Right ventricle myocardium inferior (tissue), 1 donor: ENCODE measurements at regions of chr17 and their contacts with region 1.

Region 1: GRCh38 chr17:80263253-80264204 is 2.9 kb downstream of the RNF213 start:
- DNase-seq: peak; percentile 92
- ATAC-seq: peak; percentile 47

Region 2: DNA sequence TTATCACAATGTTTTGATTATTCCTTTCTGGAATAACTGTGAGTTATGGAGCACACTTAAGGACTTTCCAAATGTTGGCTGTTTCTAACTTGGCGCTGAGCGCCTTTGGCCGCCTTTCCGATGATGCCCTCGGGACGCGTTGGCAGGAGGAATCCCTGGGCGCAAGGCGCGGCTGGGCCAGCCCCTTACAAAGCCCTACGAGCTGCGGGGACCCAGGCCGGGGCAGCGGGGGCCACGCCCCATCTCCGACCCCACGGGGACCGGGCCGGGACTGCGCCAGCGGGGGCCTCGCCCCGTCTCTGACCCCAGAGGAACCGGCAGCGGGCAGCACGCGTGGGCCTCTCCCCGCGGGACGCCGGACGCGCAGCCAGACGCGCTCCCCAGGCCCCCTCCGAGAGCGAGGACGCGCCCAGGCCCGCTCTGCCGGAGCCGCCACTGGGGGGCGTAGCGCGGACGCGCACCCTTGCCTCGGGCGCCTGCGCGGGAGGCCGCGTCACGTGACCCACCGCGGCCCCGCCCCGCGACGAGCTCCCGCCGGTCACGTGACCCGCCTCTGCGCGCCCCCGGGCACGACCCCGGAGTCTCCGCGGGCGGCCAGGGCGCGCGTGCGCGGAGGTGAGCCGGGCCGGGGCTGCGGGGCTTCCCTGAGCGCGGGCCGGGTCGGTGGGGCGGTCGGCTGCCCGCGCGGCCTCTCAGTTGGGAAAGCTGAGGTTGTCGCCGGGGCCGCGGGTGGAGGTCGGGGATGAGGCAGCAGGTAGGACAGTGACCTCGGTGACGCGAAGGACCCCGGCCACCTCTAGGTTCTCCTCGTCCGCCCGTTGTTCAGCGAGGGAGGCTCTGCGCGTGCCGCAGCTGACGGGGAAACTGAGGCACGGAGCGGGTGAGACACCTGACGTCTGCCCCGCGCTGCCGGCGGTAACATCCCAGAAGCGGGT is 162.3 kb before region 1 on chr17 and contains the start of gene GAA:
- intact Hi-C with region 1: loop called (anchors 5 kb)
- DNase-seq: peak; percentile 95
- ATAC-seq: peak; percentile 93
- total RNA-seq, gene GAA: 46.0 TPM

Region 3: GRCh38 chr17:80339118-80339517 is 75.6 kb after region 1 on chr17:
- intact Hi-C with region 1: no loop called
- DNase-seq: no peak
- ATAC-seq: no peak